ENCODE measurements at regions of chr5 and their contacts with region 1.

Region 1: DNA sequence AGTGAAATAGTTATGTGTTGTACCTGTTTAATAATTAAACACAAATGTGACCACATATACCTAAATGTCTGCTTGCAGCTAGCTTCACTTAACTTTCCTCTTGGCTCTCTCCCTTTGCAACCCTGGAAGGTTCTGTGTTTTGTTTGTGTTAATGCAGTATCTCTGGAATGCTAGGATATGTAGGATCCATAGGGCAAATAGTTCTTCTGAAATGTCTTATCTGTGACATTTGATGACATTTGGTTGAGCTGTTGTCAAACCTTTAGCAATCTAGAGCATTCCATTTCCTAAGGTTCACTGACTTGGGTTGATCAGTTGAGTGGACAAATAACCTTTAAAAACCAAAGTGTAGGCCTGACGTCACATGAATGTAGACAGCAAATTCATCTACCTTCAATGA is 21.8 kb downstream of the CTNNA1 start:
- DNase-seq: peak; percentile 86
- ATAC-seq: peak; percentile 82
- H3K4me3 ChIP-seq: peak overlapping the region in 2 of 3 experiments; percentile 11 to 15; a peak in 2 of 6 replicates
- H3K27ac ChIP-seq: peak overlapping the region; percentile 35
- H3K4me1 ChIP-seq: peaks cover 55% of the 10 kb centered on the region
- H3K27me3 ChIP-seq: no peaks in the 10 kb centered on the region
- CTCF ChIP-seq: no peak
- EP300 ChIP-seq: peak in 1 of 2 experiments; percentile 48; a peak in 1 of 4 replicates
- POLR2A ChIP-seq: no peak
- RAD21 ChIP-seq: no peak

Region 2: DNA sequence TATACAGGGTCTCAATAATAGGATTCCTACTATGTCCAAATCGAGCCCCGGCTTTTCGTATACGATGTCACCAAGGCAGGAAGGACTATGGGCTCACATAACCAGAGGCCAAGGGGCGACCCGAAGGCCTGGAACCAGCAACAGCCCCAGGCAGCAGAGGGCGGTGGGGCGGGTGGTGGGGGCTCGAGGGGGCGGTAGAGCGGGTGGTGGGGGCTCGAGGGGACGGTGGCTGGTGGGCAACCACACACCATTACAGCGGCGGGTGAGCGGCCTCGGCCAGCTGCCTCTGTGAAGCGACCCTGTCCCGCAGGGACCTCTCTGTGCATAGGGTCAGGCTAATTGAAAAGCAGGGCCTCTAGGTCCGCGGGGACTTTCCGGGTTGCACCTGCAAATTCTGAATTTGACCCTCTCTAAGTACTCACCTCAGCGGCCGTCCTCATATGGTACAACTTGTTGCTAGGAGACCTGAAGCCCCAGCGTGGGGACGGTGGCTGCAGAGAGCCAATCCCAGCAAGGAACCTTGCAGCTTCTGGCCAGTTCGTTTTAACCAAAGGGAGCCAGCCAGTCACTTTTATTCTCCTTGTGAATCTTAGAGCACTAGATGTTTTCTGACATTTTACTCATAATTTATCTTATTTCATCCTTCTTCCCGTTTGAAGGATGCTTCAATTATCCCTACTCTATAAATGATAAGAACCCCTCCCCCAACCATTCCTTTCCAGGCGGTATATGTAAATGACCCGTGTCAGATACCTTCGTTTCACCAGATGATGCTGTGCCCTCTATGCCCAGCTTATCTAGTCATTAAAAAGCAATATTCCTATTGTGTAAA is 635.9 kb before region 1 on chr5 and contains the start of gene NME5:
- CTCF ChIA-PET with region 1: no interaction called
- POLR2A ChIA-PET with region 1: no interaction called
- in situ Hi-C with region 1: no loop called
- intact Hi-C with region 1: no loop called
- DNase-seq: no peak
- ATAC-seq: peak; percentile 46
- H3K4me3 ChIP-seq: no peak within 1 kb of the TSS
- H3K27ac ChIP-seq: no peak within 1 kb of the TSS
- H3K4me1 ChIP-seq: no peaks in the 10 kb centered on the region
- H3K27me3 ChIP-seq: no peaks in the 10 kb centered on the region
- CTCF ChIP-seq: no peak
- EP300 ChIP-seq: no peak
- POLR2A ChIP-seq: no peak
- RAD21 ChIP-seq: no peak
- total RNA-seq, gene NME5: 0.18 and 0.39 TPM in 2 replicates

Region 3: DNA sequence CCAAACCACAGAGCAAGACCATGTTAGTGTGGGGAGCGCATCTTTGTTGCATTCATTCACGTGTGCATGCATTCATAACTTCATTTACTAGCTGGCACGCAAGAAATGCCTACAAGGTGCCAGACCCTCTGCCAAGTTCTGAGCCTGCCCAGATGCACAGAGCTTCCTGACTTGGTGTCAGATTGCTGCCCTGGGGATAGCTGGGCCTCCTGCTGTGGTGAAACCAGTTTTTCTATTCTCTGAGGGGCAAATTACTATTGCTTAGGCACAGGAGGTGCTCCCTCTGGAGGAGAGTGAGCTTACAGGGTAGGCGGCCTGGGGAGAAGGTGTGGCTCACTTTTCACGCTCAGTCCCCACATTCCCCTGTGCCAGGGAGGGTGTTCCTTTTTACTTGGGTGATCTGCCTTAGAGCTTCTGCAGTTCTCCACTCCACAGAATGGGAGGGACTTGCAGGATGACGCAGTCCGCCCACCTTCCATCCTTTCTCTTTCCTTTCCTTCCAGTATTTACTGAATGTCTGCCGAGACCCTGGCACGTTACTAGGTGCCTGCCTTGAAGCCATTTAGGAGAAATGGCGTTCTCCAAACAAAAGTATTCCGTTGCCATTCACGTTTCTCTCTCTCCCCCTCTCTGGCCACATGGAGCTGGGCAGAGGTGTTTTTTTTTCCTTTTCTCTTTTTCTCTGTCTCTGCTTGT is 49.7 kb before region 1 on chr5:
- CTCF ChIA-PET with region 1: no interaction called
- POLR2A ChIA-PET with region 1: interaction called, 3 read pairs
- in situ Hi-C with region 1: no loop called
- intact Hi-C with region 1: loop called (anchors 2 kb)
- DNase-seq: peak; percentile 57
- ATAC-seq: peak; percentile 80
- H3K4me3 ChIP-seq: peak overlapping the region; percentile 26 to 49 (median 31); a peak in 5 of 6 replicates
- H3K27ac ChIP-seq: peak overlapping the region; percentile 90
- H3K4me1 ChIP-seq: peaks cover 76% of the 10 kb centered on the region
- H3K27me3 ChIP-seq: no peaks in the 10 kb centered on the region; a peak in 1 of 5 replicates
- CTCF ChIP-seq: peak; percentile 68
- EP300 ChIP-seq: no peak
- POLR2A ChIP-seq: 0 out of 4 replicates have a peak, but pooled peaks of 1 of the 2 experiments have one; percentile 28
- RAD21 ChIP-seq: peak; percentile 40; the same call in 1 of the 2 replicates

Region 4: GRCh38 chr5:138737494-138738265 is 37.4 kb before region 1 on chr5:
- CTCF ChIA-PET with region 1: no interaction called
- POLR2A ChIA-PET with region 1: no interaction called
- in situ Hi-C with region 1: no loop called
- intact Hi-C with region 1: no loop called
- DNase-seq: no peak
- ATAC-seq: no peak
- H3K4me3 ChIP-seq: no peak overlapping the region
- H3K27ac ChIP-seq: no peak overlapping the region
- H3K4me1 ChIP-seq: peaks cover 29% of the 10 kb centered on the region
- H3K27me3 ChIP-seq: no peaks in the 10 kb centered on the region
- CTCF ChIP-seq: no peak
- EP300 ChIP-seq: no peak
- POLR2A ChIP-seq: no peak
- RAD21 ChIP-seq: no peak

Region 5: GRCh38 chr5:138819081-138819480 is 44.0 kb after region 1 on chr5:
- CTCF ChIA-PET with region 1: no interaction called
- POLR2A ChIA-PET with region 1: no interaction called
- in situ Hi-C with region 1: no loop called
- intact Hi-C with region 1: no loop called
- DNase-seq: no peak
- ATAC-seq: no peak
- H3K4me3 ChIP-seq: no peak overlapping the region
- H3K27ac ChIP-seq: no peak overlapping the region
- H3K4me1 ChIP-seq: no peaks in the 10 kb centered on the region
- H3K27me3 ChIP-seq: no peaks in the 10 kb centered on the region
- CTCF ChIP-seq: no peak
- EP300 ChIP-seq: no peak
- POLR2A ChIP-seq: no peak
- RAD21 ChIP-seq: no peak

Region 6: GRCh38 chr5:139611703-139612584 is 836.9 kb after region 1 on chr5:
- CTCF ChIA-PET with region 1: no interaction called
- POLR2A ChIA-PET with region 1: no interaction called
- in situ Hi-C with region 1: no loop called
- intact Hi-C with region 1: no loop called
- DNase-seq: no peak
- ATAC-seq: no peak
- H3K4me3 ChIP-seq: no peak overlapping the region
- H3K27ac ChIP-seq: no peak overlapping the region
- H3K4me1 ChIP-seq: no peaks in the 10 kb centered on the region
- H3K27me3 ChIP-seq: no peaks in the 10 kb centered on the region
- CTCF ChIP-seq: no peak
- EP300 ChIP-seq: no peak
- POLR2A ChIP-seq: no peak
- RAD21 ChIP-seq: no peak